H1 (cell line): ENCODE measurements at regions of chr15 and their contacts with region 1.

Region 1: DNA sequence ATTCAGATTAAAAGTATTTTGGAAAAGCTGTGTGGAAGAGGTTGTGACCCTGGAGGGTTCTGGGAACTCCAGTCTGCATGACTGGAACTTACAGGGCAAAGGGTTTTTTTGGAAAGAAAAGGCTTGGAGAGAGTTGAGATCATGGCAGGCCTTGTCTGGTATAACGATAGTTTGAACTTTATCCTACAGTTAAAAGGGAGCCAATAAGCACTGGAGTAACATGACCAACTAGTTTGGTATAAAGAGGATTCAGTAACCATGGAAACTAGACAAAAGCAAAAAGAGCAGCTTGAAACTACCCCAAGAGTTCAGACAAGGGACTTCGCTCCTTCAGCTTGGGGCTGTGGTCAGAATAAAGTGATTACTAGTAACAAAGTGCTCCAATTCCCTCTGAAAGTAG is 151.2 kb upstream of the TMCO5A start:
- DNase-seq: no peak
- H3K4me3 ChIP-seq: no peak overlapping the region
- H3K27ac ChIP-seq: no peak overlapping the region
- H3K4me1 ChIP-seq: no peaks in the 10 kb centered on the region
- H3K27me3 ChIP-seq: no peaks in the 10 kb centered on the region
- CTCF ChIP-seq: no peak
- EP300 ChIP-seq: no peak
- POLR2A ChIP-seq: no peak
- RAD21 ChIP-seq: no peak

Region 2: DNA sequence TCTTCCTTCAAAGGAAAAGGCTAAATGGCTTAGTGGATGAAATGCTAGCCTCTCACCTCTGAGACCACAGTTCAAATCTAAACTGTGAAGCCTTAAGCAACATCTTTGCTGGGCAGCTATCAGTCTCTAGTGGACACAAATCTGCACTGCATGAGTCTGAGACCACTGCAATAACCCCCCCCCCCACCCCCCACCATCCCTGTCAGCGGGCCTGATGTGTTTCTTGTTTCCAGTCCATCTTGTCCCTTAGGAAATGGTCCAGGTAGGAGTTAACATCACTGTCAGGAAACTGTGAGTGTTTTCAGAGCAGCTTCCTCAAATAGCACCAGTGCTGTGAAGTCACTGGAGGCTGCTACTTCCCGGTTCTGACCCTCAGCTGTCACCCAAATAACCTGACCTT is 10.6 kb after region 1 on chr15:
- CTCF ChIA-PET with region 1: interaction called, 14 read pairs
- POLR2A ChIA-PET with region 1: no interaction called
- DNase-seq: no peak
- H3K4me3 ChIP-seq: no peak overlapping the region
- H3K27ac ChIP-seq: no peak overlapping the region
- H3K4me1 ChIP-seq: no peaks in the 10 kb centered on the region
- H3K27me3 ChIP-seq: no peaks in the 10 kb centered on the region
- CTCF ChIP-seq: peak in 2 of 3 experiments; percentile 14 to 41; a peak in 1 of 4 replicates
- EP300 ChIP-seq: no peak
- POLR2A ChIP-seq: no peak
- RAD21 ChIP-seq: peak; percentile 68

Region 3: DNA sequence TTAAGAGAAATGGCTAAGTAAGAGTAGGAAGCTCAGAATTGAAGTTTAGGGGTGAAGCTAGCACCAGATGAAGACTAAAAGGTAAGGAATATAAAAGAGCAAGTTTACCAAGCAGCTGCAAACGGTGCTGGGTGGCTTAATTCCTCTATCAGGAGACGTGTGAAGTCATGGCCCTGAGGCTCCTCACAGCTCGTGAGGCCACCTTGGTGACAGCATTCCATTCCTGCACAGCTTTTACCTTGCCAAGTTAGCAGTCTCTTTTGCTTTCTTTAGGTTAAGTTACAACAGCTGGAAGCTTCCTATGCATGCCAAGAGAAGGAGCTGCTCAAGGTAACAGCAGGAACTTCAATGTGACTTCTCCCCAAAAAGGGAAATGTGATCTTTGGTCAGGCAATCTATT is 157.6 kb after region 1 on chr15:
- CTCF ChIA-PET with region 1: no interaction called
- POLR2A ChIA-PET with region 1: no interaction called
- DNase-seq: no peak
- H3K4me3 ChIP-seq: no peak overlapping the region
- H3K27ac ChIP-seq: no peak overlapping the region
- H3K4me1 ChIP-seq: no peaks in the 10 kb centered on the region
- H3K27me3 ChIP-seq: no peaks in the 10 kb centered on the region
- CTCF ChIP-seq: no peak
- EP300 ChIP-seq: no peak
- POLR2A ChIP-seq: no peak
- RAD21 ChIP-seq: no peak